Activated CD4-positive, alpha-beta memory T cell treated with anti-CD3 and anti-CD28 coated beads, Interleukin-2, amount 10 ng/mL, durations not matched to agents 7 days and 5 days (primary cell): ENCODE measurements at regions of chr20 and their contacts with region 1.

Region 1: DNA sequence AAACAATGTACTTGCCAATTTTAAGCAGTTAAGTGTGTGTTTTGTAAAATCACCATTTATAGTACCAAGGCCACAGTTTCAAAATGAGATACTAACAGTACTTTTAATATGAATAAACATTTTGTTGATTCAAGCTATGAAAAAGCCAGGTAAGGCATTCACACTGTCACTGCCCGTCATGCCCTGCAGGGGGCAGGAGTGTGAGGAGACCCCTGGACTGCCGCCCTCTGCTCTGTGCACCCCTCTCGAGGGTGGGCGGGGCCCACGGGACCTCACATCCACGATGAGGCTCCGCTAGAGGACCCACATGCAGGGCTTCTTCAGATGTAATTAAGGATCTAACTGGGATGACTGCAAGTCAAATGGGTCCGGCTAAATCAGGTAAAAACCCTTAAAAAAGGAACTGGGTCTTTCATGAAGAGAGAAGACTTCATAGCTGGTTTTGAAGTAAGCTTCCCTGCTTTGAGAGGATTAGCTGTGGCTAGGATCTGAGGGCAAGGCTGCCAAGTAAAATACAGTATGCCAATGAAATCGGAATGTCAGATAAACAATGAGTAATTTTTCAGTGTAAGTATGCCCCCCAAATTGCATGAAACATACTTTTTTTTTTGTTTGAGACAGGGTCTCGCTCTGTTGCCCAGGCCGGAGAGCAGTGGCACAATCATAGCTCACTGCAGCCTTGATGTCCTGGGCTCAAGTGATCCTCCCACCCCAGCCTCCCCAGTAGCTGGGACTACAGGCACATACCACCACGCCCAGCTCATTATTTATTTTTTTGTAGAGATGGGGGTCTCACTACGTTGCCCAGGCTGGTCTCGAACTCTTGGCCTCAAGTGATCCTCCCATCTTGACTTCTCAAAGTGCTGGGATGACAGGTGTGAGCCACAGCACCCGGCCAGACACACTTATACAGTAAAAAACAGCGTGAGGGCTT is 18.7 kb downstream of the DIDO1 start:
- DNase-seq: no peak
- H3K4me3 Mint-ChIP-seq: no peak overlapping the region
- H3K27ac Mint-ChIP-seq: no peak overlapping the region
- H3K4me1 Mint-ChIP-seq: peaks cover 22% of the 10 kb centered on the region
- H3K27me3 Mint-ChIP-seq: no peaks in the 10 kb centered on the region

Region 2: GRCh38 chr20:62752671-62753501 is 154.8 kb before region 1 on chr20:
- CTCF ChIA-PET with region 1: no interaction called
- POLR2A ChIA-PET with region 1: no interaction called
- DNase-seq: no peak
- H3K4me3 Mint-ChIP-seq: no peak overlapping the region
- H3K27ac Mint-ChIP-seq: no peak overlapping the region
- H3K4me1 Mint-ChIP-seq: no peaks in the 10 kb centered on the region
- H3K27me3 Mint-ChIP-seq: peaks cover 36% of the 10 kb centered on the region

Region 3: DNA sequence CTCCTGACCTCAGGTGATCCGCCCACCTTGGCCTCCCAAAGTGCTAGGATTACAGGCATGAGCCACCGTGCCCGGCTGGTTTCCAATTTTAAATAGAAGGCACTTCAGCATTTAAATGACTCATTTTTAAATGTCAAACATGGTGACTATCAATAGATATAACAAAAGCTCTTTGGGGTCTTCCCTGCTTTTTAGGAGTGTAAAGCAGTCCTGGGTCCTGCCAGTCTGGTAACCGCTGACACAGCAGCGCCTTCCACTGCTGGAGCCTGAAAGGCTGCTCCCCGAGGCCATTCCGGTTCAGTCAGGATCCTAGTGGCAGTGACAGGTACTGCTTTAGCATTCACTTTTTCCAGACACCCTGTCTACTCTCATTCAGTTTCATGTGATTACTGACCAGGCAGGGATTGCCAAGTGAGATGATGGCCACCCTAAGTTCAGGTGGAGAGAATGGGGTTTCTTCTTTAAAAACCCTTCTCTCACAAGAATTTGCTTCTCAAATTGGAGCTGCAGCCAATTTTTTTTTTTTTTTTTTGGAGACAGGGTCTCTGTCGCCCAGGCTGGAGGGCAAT is 13.6 kb after region 1 on chr20:
- CTCF ChIA-PET with region 1: interaction called, 58 read pairs
- POLR2A ChIA-PET with region 1: interaction called, 88 read pairs
- DNase-seq: peak; percentile 71
- H3K4me3 Mint-ChIP-seq: peak overlapping the region; percentile 58
- H3K27ac Mint-ChIP-seq: peak overlapping the region; percentile 81
- H3K4me1 Mint-ChIP-seq: peaks cover 83% of the 10 kb centered on the region
- H3K27me3 Mint-ChIP-seq: no peaks in the 10 kb centered on the region